Activated T-helper 2 cell treated with anti-CD3 and anti-CD28 coated beads, Interferon-gamma antibody, Interleukin-2, Interleukin-4, amounts not matched to agents 10 μg/mL and 5 μg/mL and 100 μg/mL, durations not matched to agents 14 hours and 24 hours and 36 hours (primary cell): ENCODE measurements at regions of chr1 and their contacts with region 1.

Region 1: DNA sequence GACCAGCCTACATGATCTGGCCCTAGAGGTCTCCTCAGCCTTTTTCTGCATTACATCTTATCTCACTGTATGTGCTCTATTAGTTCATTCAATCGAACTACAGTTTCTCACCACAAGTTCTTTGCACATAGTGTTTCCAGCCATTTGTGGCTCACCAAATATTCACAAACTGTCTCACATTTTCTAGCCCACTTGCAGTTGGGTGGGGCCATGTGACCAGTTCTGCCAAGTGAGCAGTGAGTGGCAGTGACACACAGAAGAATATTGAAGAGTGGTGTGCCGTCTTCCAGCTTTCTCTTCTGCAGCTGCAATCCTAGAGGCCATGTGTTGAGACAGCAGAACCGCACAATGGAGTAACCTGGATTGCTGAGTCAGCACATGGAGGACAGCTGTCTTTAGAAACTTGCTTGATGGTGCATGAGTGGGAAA is 103.2 kb upstream of the ZNF644 start:
- DNase-seq: peak; percentile 11
- H3K4me3 Mint-ChIP-seq: no peak overlapping the region
- H3K27ac Mint-ChIP-seq: peak overlapping the region; percentile 80
- H3K4me1 Mint-ChIP-seq: peaks cover 17% of the 10 kb centered on the region
- H3K27me3 Mint-ChIP-seq: peaks cover 5% of the 10 kb centered on the region

Region 2: DNA sequence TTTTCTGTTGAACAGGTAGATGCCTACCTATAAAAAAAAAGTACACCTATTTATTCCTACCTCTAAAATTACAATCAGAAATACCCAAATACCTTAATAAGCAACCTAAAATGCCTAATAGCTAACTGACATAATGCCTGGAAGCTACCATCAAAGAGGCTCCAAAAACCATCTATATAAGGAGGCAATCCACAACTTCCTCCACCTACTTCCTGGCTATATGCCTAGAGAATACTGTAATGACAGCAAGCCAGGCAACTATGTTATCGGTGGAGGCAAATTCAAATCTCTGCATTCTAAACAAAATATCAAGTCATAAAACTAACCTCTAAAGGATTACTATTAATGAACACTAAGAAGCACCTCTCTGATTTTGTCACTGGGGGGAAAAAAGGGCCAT is 113.3 kb before region 1 on chr1:
- intact Hi-C with region 1: no loop called
- DNase-seq: no peak
- H3K4me3 Mint-ChIP-seq: no peak overlapping the region
- H3K27ac Mint-ChIP-seq: no peak overlapping the region
- H3K4me1 Mint-ChIP-seq: peaks cover 37% of the 10 kb centered on the region
- H3K27me3 Mint-ChIP-seq: no peaks in the 10 kb centered on the region

Region 3: GRCh38 chr1:91021686-91022517 is 103.1 kb before region 1 on chr1 and contains the start of gene ZNF644:
- intact Hi-C with region 1: loop called (anchors 1 kb)
- DNase-seq: peak; percentile 89
- H3K4me3 Mint-ChIP-seq: peak within 1 kb of the TSS; percentile 95
- H3K27ac Mint-ChIP-seq: peak within 1 kb of the TSS; percentile 100
- H3K4me1 Mint-ChIP-seq: peaks cover 37% of the 10 kb centered on the region
- H3K27me3 Mint-ChIP-seq: no peaks in the 10 kb centered on the region
- total RNA-seq, gene ZNF644: 49.8 and 56.1 TPM in 2 replicates

Region 4: DNA sequence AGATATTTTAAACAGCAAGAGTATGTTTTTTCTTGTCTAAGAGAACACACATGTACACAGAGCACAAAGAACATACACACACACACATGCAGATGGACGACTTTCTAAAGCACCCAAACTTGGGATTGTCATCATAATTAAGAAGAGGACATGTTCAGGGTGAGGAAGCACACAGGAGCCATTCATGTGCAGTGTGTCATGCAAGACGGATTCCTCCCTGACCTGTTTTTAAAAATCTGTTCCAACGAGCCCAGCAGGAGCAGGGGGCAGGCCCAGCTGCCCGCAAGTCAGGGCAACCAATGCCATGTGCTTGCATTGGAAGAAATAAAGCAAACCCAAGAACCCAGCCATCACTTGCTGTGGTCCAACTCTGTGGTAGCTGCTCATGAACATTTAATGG is 64.1 kb after region 1 on chr1:
- intact Hi-C with region 1: no loop called
- DNase-seq: no peak
- H3K4me3 Mint-ChIP-seq: no peak overlapping the region
- H3K27ac Mint-ChIP-seq: no peak overlapping the region
- H3K4me1 Mint-ChIP-seq: no peaks in the 10 kb centered on the region
- H3K27me3 Mint-ChIP-seq: no peaks in the 10 kb centered on the region

Region 5: GRCh38 chr1:91325461-91325860 is 200.5 kb after region 1 on chr1:
- intact Hi-C with region 1: no loop called
- DNase-seq: no peak
- H3K4me3 Mint-ChIP-seq: no peak overlapping the region
- H3K27ac Mint-ChIP-seq: no peak overlapping the region
- H3K4me1 Mint-ChIP-seq: no peaks in the 10 kb centered on the region
- H3K27me3 Mint-ChIP-seq: peaks cover 16% of the 10 kb centered on the region